Activated CD8-positive, alpha-beta T cell treated with anti-CD3 and anti-CD28 coated beads, Interleukin-2, amount 10 ng/mL, durations not matched to agents 7 days and 5 days (primary cell): ENCODE measurements at regions of chr12 and their contacts with region 1.

Region 1: GRCh38 chr12:6367065-6367968 is 8.0 kb downstream of the SCNN1A start:
- DNase-seq: peak; percentile 66
- ATAC-seq: peak; percentile 62
- H3K4me3 Mint-ChIP-seq: no peak overlapping the region
- H3K27ac Mint-ChIP-seq: peak overlapping the region; percentile 71
- H3K4me1 Mint-ChIP-seq: peaks cover 48% of the 10 kb centered on the region
- H3K27me3 Mint-ChIP-seq: no peaks in the 10 kb centered on the region

Region 2: DNA sequence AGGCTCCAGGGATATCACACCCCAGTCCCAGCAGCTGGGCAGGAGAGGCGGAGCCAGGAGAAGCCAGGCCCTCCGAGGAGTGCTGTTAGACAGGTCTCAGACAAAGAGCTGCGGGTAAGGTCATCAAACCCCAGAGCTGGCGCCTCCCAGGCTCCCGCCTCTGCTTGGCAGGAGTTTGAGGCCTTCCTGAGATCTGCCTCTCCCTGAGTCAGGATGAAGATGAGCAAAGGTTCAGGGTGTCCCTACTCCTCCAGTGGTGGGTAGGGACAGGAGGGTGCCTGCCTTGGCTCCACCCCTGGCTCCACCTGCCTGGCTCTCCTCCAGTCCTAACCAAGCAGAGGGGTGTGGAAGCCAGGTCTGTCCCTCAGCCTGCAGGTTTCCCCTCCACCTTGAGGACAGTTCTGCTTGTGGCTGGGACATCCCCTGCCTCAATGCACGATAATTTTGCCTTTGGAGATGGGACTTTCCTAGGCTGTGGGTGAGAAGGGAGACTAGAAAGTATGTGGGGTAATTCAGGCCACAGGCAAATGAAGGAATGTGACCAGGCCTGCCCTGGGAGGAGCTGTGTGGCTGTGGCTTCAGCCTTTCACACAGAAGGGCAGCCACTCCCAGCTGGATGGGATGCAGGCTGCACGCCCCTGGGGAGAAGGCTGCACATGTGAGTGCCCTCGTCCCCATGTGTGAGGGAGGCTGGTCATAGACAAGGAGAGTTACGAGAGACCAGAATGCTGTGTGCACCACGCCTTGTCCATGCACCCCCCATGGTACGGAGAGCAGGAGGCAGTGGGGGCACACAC is 54.6 kb before region 1 on chr12:
- CTCF ChIA-PET with region 1: no interaction called
- POLR2A ChIA-PET with region 1: no interaction called
- DNase-seq: no peak
- ATAC-seq: no peak
- H3K4me3 Mint-ChIP-seq: no peak overlapping the region
- H3K27ac Mint-ChIP-seq: no peak overlapping the region
- H3K4me1 Mint-ChIP-seq: peaks cover 10% of the 10 kb centered on the region
- H3K27me3 Mint-ChIP-seq: peaks cover 19% of the 10 kb centered on the region

Region 3: GRCh38 chr12:6323340-6323994 is 43.9 kb before region 1 on chr12:
- CTCF ChIA-PET with region 1: interaction called, 15 read pairs
- POLR2A ChIA-PET with region 1: interaction called, 3 read pairs
- DNase-seq: peak; percentile 60
- ATAC-seq: peak; percentile 73
- H3K4me3 Mint-ChIP-seq: peak overlapping the region; percentile 45
- H3K27ac Mint-ChIP-seq: peak overlapping the region; percentile 87
- H3K4me1 Mint-ChIP-seq: peaks cover 62% of the 10 kb centered on the region
- H3K27me3 Mint-ChIP-seq: no peaks in the 10 kb centered on the region

Region 4: DNA sequence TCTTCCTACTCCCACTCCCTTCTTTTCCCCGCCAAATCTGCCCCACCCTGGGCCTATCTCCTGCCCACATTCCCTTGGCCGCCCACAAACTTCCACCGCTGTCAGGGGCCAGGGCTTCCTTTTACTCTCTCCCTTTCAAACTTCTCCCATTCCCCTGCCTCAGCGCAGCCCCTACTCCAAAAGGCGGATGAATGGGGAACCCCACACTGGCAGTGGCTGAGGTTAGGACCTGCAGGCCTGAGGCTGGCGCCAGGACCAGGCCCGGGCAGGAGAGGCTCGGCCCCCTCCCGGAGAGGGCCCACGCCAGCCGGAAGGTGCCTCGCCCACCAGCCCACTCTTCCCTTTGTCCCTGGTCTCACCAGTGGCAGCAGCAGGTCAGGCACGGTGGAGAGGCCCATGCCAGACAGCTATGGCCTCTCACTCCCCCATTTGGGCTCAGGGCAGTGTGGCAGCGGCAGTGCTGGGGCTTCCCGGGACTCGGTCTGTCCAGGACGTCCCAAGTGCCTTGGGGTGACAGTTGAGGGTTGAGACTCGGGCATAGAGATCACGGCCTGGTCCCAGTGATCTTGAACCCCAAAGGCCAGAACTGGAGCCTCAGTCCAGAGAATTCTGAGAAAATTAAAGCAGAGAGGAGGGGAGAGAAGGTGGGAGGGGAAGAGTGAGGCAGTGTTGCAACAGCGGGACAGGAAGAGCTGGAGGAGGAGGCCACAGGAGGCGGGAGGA is 25.7 kb before region 1 on chr12 and contains the start of gene TNFRSF1A:
- CTCF ChIA-PET with region 1: interaction called, 176 read pairs
- POLR2A ChIA-PET with region 1: interaction called, 10 read pairs
- DNase-seq: peak; percentile 67
- ATAC-seq: peak; percentile 43
- H3K4me3 Mint-ChIP-seq: no peak within 1 kb of the TSS
- H3K27ac Mint-ChIP-seq: no peak within 1 kb of the TSS
- H3K4me1 Mint-ChIP-seq: peaks cover 37% of the 10 kb centered on the region
- H3K27me3 Mint-ChIP-seq: no peaks in the 10 kb centered on the region
- total RNA-seq, gene TNFRSF1A: 58.8 to 63.4 TPM

Region 5: GRCh38 chr12:6355491-6356371 is 11.6 kb before region 1 on chr12:
- CTCF ChIA-PET with region 1: interaction called, 20 read pairs
- POLR2A ChIA-PET with region 1: interaction called, 3 read pairs
- DNase-seq: no peak
- ATAC-seq: no peak
- H3K4me3 Mint-ChIP-seq: no peak overlapping the region
- H3K27ac Mint-ChIP-seq: no peak overlapping the region
- H3K4me1 Mint-ChIP-seq: peaks cover 7% of the 10 kb centered on the region
- H3K27me3 Mint-ChIP-seq: peaks cover 13% of the 10 kb centered on the region

Region 6: DNA sequence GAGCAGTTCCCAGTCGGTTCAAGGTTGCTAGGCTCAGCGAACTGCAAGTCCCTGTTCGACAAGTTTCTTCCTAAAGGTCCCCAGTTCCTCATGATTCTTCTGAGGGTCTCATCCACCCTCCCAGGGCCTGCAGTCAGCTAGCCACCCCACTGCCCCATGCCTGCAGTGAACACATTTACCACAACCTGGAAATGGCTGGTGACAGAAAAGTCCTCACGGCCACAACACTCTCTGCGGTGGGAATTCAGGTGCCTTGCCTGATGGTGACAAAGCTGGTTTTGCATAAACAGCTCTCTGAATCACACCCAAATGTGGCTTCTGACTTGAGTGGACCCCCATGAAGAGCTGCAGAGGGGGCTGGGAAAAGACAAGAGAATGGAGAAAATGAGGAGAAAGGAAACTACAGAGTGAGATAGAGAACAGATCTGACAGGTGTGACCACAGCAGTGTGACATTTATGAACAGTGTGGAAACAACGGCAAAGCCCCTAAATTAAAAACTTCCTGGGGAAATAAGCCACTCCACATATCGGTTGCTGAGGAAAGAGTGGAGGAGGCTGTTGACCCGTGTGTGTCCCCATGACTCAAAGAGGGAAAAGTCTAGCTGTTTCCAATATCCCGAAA is 76.2 kb after region 1 on chr12:
- CTCF ChIA-PET with region 1: no interaction called
- POLR2A ChIA-PET with region 1: no interaction called
- DNase-seq: peak; percentile 49
- ATAC-seq: peak; percentile 29
- H3K4me3 Mint-ChIP-seq: peak overlapping the region; percentile 90
- H3K27ac Mint-ChIP-seq: peak overlapping the region; percentile 96
- H3K4me1 Mint-ChIP-seq: peaks cover 68% of the 10 kb centered on the region
- H3K27me3 Mint-ChIP-seq: no peaks in the 10 kb centered on the region